Activated CD4-positive, alpha-beta T cell treated with anti-CD3 and anti-CD28 coated beads for 36 hours (primary cell): ENCODE measurements at regions of chr7 and their contacts with region 1.

Region 1: DNA sequence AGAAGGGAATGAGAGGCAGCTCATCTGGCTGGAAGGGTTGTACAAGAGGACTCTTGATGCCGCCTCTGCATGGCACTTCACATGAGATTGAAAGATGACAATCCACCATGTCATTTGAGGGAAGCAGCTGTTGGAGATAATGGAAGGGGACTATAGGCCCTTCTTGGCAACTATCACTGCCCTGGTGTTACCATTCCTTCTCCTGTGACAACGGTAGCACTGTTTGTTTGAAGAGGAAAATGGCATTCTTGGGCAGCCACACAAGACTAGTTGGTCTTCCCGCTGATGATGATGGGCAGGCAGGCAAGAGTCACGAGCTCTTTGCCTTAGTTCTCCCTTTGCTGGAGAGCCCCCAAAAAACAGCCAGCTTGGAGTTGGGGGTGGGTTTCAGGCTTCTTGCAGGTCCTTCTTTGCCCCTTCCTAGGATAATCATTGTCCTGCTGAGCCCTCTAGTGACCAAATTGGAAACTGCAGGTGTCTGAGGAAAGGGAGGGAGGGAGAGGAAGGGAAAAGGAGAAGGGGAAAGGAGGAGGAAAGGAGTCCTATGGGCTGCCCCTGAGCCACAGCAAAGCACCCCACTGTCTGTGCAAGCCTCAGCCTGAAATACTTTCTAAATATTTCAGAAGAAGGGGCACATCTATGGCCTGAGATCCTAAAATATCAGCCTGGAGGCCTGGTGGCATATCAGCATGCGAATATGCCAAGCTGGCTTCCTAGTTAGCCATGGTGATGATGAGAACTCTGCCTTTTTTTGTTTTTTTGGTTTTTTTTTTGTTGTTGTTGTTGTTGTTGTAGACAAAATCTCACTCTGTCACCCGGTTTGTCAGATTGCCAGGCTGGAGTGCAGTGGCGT is 165.6 kb upstream of the KMT2E start:
- DNase-seq: peak; percentile 70
- ATAC-seq: peak; percentile 66
- H3K4me3 Mint-ChIP-seq: no peak overlapping the region
- H3K27ac Mint-ChIP-seq: no peak overlapping the region
- H3K4me1 Mint-ChIP-seq: no peaks in the 10 kb centered on the region
- H3K27me3 Mint-ChIP-seq: peaks cover 10% of the 10 kb centered on the region

Region 2: GRCh38 chr7:103929871-103930311 is 918.5 kb before region 1 on chr7:
- CTCF ChIA-PET with region 1: no interaction called
- POLR2A ChIA-PET with region 1: no interaction called
- intact Hi-C with region 1: no loop called
- DNase-seq: no peak
- ATAC-seq: no peak
- H3K4me3 Mint-ChIP-seq: no peak overlapping the region
- H3K27ac Mint-ChIP-seq: no peak overlapping the region
- H3K4me1 Mint-ChIP-seq: no peaks in the 10 kb centered on the region
- H3K27me3 Mint-ChIP-seq: peaks cover 7% of the 10 kb centered on the region

Region 3: GRCh38 chr7:104231054-104232046 is 617.0 kb before region 1 on chr7:
- CTCF ChIA-PET with region 1: interaction called, 27 read pairs
- POLR2A ChIA-PET with region 1: no interaction called
- intact Hi-C with region 1: loop called (anchors 1 kb)
- DNase-seq: peak; percentile 58
- ATAC-seq: peak; percentile 75
- H3K4me3 Mint-ChIP-seq: no peak overlapping the region
- H3K27ac Mint-ChIP-seq: no peak overlapping the region
- H3K4me1 Mint-ChIP-seq: peaks cover 4% of the 10 kb centered on the region
- H3K27me3 Mint-ChIP-seq: peaks cover 21% of the 10 kb centered on the region

Region 4: GRCh38 chr7:104272767-104273384 is 575.5 kb before region 1 on chr7:
- CTCF ChIA-PET with region 1: no interaction called
- POLR2A ChIA-PET with region 1: no interaction called
- intact Hi-C with region 1: loop called in 1 of 2 experiments (anchors 2 kb)
- DNase-seq: no peak
- ATAC-seq: no peak
- H3K4me3 Mint-ChIP-seq: no peak overlapping the region
- H3K27ac Mint-ChIP-seq: no peak overlapping the region
- H3K4me1 Mint-ChIP-seq: peaks cover 2% of the 10 kb centered on the region
- H3K27me3 Mint-ChIP-seq: peaks cover 23% of the 10 kb centered on the region

Region 5: DNA sequence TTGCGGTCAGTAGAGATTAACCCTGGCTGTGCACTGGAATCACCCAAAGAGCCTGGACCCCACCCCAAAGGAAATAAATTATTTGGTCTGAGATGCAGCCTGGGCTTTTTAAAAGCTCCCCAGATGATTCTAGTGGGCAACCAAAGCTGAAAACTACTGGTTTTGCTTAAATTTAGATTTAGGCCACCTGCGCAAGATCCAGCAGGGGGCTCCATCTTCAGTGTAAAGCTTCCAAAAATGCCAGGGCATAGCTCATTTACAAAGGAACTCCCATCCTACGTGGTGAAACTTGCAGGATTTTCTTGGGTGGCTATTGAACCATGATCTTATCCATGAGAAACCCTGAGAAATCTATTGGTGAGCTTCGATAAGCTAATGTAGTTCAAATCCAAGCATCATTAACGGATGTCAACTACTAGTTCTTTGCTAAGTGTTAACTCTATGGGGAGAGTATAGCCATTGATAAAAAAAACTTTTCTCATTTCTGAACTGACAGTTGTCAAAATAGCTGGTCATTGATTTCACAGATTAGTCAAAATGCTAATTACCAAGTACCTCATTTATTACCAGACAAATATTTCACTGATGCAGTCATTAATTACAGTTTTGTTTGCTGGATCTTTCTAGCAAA is 204.7 kb before region 1 on chr7:
- CTCF ChIA-PET with region 1: interaction called, 5 read pairs
- POLR2A ChIA-PET with region 1: no interaction called
- intact Hi-C with region 1: loop called (anchors 1 to 2 kb)
- DNase-seq: peak; percentile 22
- ATAC-seq: no peak
- H3K4me3 Mint-ChIP-seq: no peak overlapping the region
- H3K27ac Mint-ChIP-seq: no peak overlapping the region
- H3K4me1 Mint-ChIP-seq: no peaks in the 10 kb centered on the region
- H3K27me3 Mint-ChIP-seq: peaks cover 9% of the 10 kb centered on the region

Region 6: DNA sequence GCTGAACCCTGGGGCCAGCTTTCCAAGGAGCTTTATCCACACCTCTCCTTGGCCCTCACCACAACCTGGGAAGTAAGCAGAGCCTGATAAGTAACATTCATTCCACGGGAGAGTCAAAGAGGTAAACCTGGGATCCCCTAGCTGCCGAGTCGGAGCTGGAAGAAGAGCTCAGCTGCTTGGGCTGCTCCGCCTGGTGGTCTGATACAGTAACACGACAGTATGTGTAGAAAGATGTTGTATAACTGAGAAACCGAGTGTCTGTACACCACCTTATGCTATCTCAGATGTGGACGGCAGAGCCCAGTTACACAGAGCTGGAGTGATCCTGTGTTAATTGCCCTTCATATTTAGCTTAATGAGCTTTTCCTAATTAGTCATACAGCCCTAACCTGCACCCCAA is 14.4 kb after region 1 on chr7:
- CTCF ChIA-PET with region 1: interaction called, 15 read pairs
- POLR2A ChIA-PET with region 1: no interaction called
- intact Hi-C with region 1: no loop called
- DNase-seq: no peak
- ATAC-seq: no peak
- H3K4me3 Mint-ChIP-seq: no peak overlapping the region
- H3K27ac Mint-ChIP-seq: no peak overlapping the region
- H3K4me1 Mint-ChIP-seq: peaks cover 10% of the 10 kb centered on the region
- H3K27me3 Mint-ChIP-seq: peaks cover 6% of the 10 kb centered on the region

Region 7: DNA sequence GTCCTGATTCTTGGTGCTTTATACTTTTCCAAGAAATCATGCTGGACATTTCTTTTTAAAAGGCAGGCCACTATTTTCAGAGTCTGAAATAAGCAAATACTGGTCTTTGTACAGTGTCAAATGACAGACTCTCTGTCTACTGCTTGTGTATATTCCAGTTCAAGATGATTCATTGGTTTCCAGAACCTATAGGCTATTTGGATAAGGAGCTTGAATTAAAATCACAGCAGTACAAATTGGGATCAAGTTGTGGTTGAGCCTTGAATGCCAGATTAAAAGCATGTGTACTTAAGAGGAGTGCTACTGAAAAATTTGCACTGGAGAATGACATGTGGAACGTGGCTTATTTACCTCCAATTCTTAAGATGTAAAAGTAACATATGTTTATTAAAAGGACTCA is 176.4 kb after region 1 on chr7:
- CTCF ChIA-PET with region 1: no interaction called
- POLR2A ChIA-PET with region 1: no interaction called
- intact Hi-C with region 1: no loop called
- DNase-seq: no peak
- ATAC-seq: peak; percentile 17
- H3K4me3 Mint-ChIP-seq: no peak overlapping the region
- H3K27ac Mint-ChIP-seq: peak overlapping the region; percentile 60
- H3K4me1 Mint-ChIP-seq: peaks cover 91% of the 10 kb centered on the region
- H3K27me3 Mint-ChIP-seq: no peaks in the 10 kb centered on the region